Activated CD8-positive, alpha-beta T cell treated with anti-CD3 and anti-CD28 coated beads for 36 hours (primary cell): ENCODE measurements at regions of chr20 and their contacts with region 1.

Region 1: GRCh38 chr20:44115762-44116644 is 71.0 kb downstream of the JPH2 start:
- DNase-seq: no peak
- ATAC-seq: no peak
- H3K4me3 Mint-ChIP-seq: no peak overlapping the region
- H3K27ac Mint-ChIP-seq: no peak overlapping the region
- H3K4me1 Mint-ChIP-seq: peaks cover 3% of the 10 kb centered on the region
- H3K27me3 Mint-ChIP-seq: peaks cover 23% of the 10 kb centered on the region
- CTCF ChIP-seq: no peak

Region 2: GRCh38 chr20:44074252-44075151 is 41.5 kb before region 1 on chr20:
- CTCF ChIA-PET with region 1: no interaction called
- POLR2A ChIA-PET with region 1: no interaction called
- intact Hi-C with region 1: no loop called
- DNase-seq: no peak
- ATAC-seq: no peak
- H3K4me3 Mint-ChIP-seq: no peak overlapping the region
- H3K27ac Mint-ChIP-seq: peak overlapping the region; percentile 19
- H3K4me1 Mint-ChIP-seq: peaks cover 55% of the 10 kb centered on the region
- H3K27me3 Mint-ChIP-seq: no peaks in the 10 kb centered on the region
- CTCF ChIP-seq: no peak

Region 3: GRCh38 chr20:44142413-44142812 is 26.4 kb after region 1 on chr20:
- CTCF ChIA-PET with region 1: interaction called, 10 read pairs
- POLR2A ChIA-PET with region 1: no interaction called
- intact Hi-C with region 1: no loop called
- DNase-seq: no peak
- ATAC-seq: no peak
- H3K4me3 Mint-ChIP-seq: no peak overlapping the region
- H3K27ac Mint-ChIP-seq: no peak overlapping the region
- H3K4me1 Mint-ChIP-seq: no peaks in the 10 kb centered on the region
- H3K27me3 Mint-ChIP-seq: peaks cover 8% of the 10 kb centered on the region
- CTCF ChIP-seq: no peak

Region 4: GRCh38 chr20:44153636-44154043 is 37.6 kb after region 1 on chr20:
- CTCF ChIA-PET with region 1: interaction called, 20 read pairs
- POLR2A ChIA-PET with region 1: no interaction called
- intact Hi-C with region 1: no loop called
- DNase-seq: peak; percentile 8
- ATAC-seq: peak; percentile 64
- H3K4me3 Mint-ChIP-seq: no peak overlapping the region
- H3K27ac Mint-ChIP-seq: peak overlapping the region; percentile 35
- H3K4me1 Mint-ChIP-seq: peaks cover 12% of the 10 kb centered on the region
- H3K27me3 Mint-ChIP-seq: peaks cover 3% of the 10 kb centered on the region
- CTCF ChIP-seq: no peak

Region 5: GRCh38 chr20:44196271-44196670 is 80.3 kb after region 1 on chr20:
- CTCF ChIA-PET with region 1: interaction called, 215 read pairs
- POLR2A ChIA-PET with region 1: interaction called, 3 read pairs
- intact Hi-C with region 1: loop called (anchors 5 kb)
- DNase-seq: no peak
- ATAC-seq: no peak
- H3K4me3 Mint-ChIP-seq: no peak overlapping the region
- H3K27ac Mint-ChIP-seq: no peak overlapping the region
- H3K4me1 Mint-ChIP-seq: peaks cover 22% of the 10 kb centered on the region
- H3K27me3 Mint-ChIP-seq: no peaks in the 10 kb centered on the region
- CTCF ChIP-seq: peak; percentile 16